Activated naive CD4-positive, alpha-beta T cell treated with anti-CD3 and anti-CD28 coated beads for 36 hours (primary cell): ENCODE measurements at regions of chr1 and their contacts with region 1.

Region 1: GRCh38 chr1:16055613-16056520 is 12.3 kb downstream of the CLCNKB start:
- DNase-seq: peak; percentile 93
- H3K4me3 Mint-ChIP-seq: no peak overlapping the region
- H3K27ac Mint-ChIP-seq: no peak overlapping the region
- H3K4me1 Mint-ChIP-seq: peaks cover 2% of the 10 kb centered on the region
- H3K27me3 Mint-ChIP-seq: no peaks in the 10 kb centered on the region

Region 2: GRCh38 chr1:15062479-15063099 is 993.3 kb before region 1 on chr1:
- CTCF ChIA-PET with region 1: no interaction called
- intact Hi-C with region 1: no loop called
- DNase-seq: no peak
- H3K4me3 Mint-ChIP-seq: no peak overlapping the region
- H3K27ac Mint-ChIP-seq: no peak overlapping the region
- H3K4me1 Mint-ChIP-seq: no peaks in the 10 kb centered on the region
- H3K27me3 Mint-ChIP-seq: no peaks in the 10 kb centered on the region

Region 3: DNA sequence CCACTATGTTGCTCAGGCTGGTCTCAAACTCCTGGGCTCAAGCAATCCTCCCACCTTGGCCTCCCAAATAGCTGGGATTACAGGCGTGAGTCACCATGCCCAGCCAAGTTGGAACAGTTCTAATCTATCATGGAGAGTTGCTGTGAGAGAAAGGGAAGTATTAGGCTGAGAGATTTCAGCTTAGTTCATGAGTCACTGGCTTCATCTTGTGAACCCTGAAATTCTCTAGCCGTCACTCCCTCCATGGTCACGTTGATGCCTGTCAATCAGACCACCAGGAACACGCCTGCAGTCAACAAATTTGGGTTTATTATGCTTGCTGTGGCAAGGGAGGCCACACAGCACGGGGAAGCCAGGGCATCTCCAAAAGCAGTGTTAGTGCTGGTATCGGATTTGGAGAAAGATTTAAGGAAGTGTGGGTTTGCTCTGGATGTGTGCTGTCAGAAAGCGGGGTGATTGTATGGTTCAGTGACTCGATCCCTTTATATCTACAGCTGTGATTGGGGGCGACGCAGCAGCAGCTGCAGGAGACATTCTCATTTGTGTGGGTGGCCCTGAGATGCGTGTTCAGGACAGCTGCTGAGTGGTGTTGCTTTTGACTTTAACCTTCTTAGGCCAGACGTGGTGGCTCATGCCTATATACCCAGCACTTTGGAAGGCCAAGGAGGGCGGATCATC is 267.1 kb before region 1 on chr1:
- CTCF ChIA-PET with region 1: interaction called, 12 read pairs
- intact Hi-C with region 1: loop called (anchors 1 kb)
- DNase-seq: no peak
- H3K4me3 Mint-ChIP-seq: no peak overlapping the region
- H3K27ac Mint-ChIP-seq: no peak overlapping the region
- H3K4me1 Mint-ChIP-seq: peaks cover 2% of the 10 kb centered on the region
- H3K27me3 Mint-ChIP-seq: no peaks in the 10 kb centered on the region

Region 4: GRCh38 chr1:15803354-15803753 is 252.5 kb before region 1 on chr1:
- CTCF ChIA-PET with region 1: interaction called, 4 read pairs
- intact Hi-C with region 1: loop called (anchors 1 kb)
- DNase-seq: peak; percentile 32
- H3K4me3 Mint-ChIP-seq: no peak overlapping the region
- H3K27ac Mint-ChIP-seq: no peak overlapping the region
- H3K4me1 Mint-ChIP-seq: no peaks in the 10 kb centered on the region
- H3K27me3 Mint-ChIP-seq: no peaks in the 10 kb centered on the region

Region 5: GRCh38 chr1:16032388-16033103 is 23.3 kb before region 1 on chr1:
- CTCF ChIA-PET with region 1: no interaction called
- intact Hi-C with region 1: loop called (anchors 1 kb)
- DNase-seq: peak; percentile 70
- H3K4me3 Mint-ChIP-seq: no peak overlapping the region
- H3K27ac Mint-ChIP-seq: no peak overlapping the region
- H3K4me1 Mint-ChIP-seq: peaks cover 2% of the 10 kb centered on the region
- H3K27me3 Mint-ChIP-seq: peaks cover 17% of the 10 kb centered on the region